T-cell (primary cell): ENCODE measurements at regions of chr5 and their contacts with region 1.

Region 1: GRCh38 chr5:98911280-98912040 is 17.3 kb downstream of the CHD1 start:
- DNase-seq: no peak
- ATAC-seq: peak in 1 of 4 experiments; percentile 23
- H3K4me3 ChIP-seq: no peak overlapping the region
- H3K4me3 Mint-ChIP-seq: no peak overlapping the region
- H3K27ac ChIP-seq: no peak overlapping the region
- H3K27ac Mint-ChIP-seq: peak overlapping the region; percentile 50 to 53
- H3K4me1 ChIP-seq: peaks cover 13 to 19% of the 10 kb centered on the region in 2 experiments
- H3K4me1 Mint-ChIP-seq: peaks cover 69 to 74% (median 70%) of the 10 kb centered on the region in 3 donors
- H3K27me3 ChIP-seq: no peaks in the 10 kb centered on the region
- H3K27me3 Mint-ChIP-seq: no peaks in the 10 kb centered on the region

Region 2: GRCh38 chr5:97364731-97365130 is 1546.7 kb before region 1 on chr5:
- CTCF ChIA-PET with region 1: no interaction called
- POLR2A ChIA-PET with region 1: no interaction called
- DNase-seq: no peak
- ATAC-seq: no peak
- H3K4me3 ChIP-seq: no peak overlapping the region
- H3K4me3 Mint-ChIP-seq: no peak overlapping the region
- H3K27ac ChIP-seq: no peak overlapping the region
- H3K27ac Mint-ChIP-seq: no peak overlapping the region
- H3K4me1 ChIP-seq: no peaks in the 10 kb centered on the region
- H3K4me1 Mint-ChIP-seq: no peaks in the 10 kb centered on the region
- H3K27me3 ChIP-seq: no peaks in the 10 kb centered on the region
- H3K27me3 Mint-ChIP-seq: no peaks in the 10 kb centered on the region

Region 3: DNA sequence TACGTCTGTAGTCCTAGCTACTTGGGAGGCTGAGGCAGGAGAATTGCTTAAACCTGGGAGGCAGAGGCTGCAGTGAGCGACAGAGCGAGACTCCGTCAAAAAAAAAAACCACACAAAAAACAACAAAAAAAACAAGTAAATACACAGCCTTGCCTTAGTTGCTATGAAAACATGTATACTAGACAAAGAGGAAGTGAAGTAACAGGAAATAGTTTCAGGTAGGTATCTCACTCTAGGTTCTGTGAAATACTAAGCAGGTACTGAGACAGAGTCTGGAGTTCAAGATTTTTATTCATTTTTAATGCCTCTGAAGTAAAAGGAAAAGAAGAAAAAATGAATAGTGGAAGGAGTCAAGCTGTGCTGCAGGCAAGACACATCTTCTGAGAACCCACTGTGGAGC is 825.9 kb before region 1 on chr5:
- CTCF ChIA-PET with region 1: no interaction called
- POLR2A ChIA-PET with region 1: no interaction called
- DNase-seq: no peak
- ATAC-seq: no peak
- H3K4me3 ChIP-seq: no peak overlapping the region
- H3K4me3 Mint-ChIP-seq: no peak overlapping the region
- H3K27ac ChIP-seq: no peak overlapping the region
- H3K27ac Mint-ChIP-seq: no peak overlapping the region
- H3K4me1 ChIP-seq: no peaks in the 10 kb centered on the region
- H3K4me1 Mint-ChIP-seq: no peaks in the 10 kb centered on the region
- H3K27me3 ChIP-seq: no peaks in the 10 kb centered on the region
- H3K27me3 Mint-ChIP-seq: no peaks in the 10 kb centered on the region

Region 4: GRCh38 chr5:98365126-98365525 is 546.3 kb before region 1 on chr5:
- CTCF ChIA-PET with region 1: no interaction called
- POLR2A ChIA-PET with region 1: no interaction called
- DNase-seq: no peak
- ATAC-seq: no peak
- H3K4me3 ChIP-seq: no peak overlapping the region
- H3K4me3 Mint-ChIP-seq: no peak overlapping the region
- H3K27ac ChIP-seq: no peak overlapping the region
- H3K27ac Mint-ChIP-seq: no peak overlapping the region
- H3K4me1 ChIP-seq: no peaks in the 10 kb centered on the region
- H3K4me1 Mint-ChIP-seq: no peaks in the 10 kb centered on the region
- H3K27me3 ChIP-seq: peaks cover 0 to 5% of the 10 kb centered on the region in 2 experiments
- H3K27me3 Mint-ChIP-seq: no peaks in the 10 kb centered on the region

Region 5: GRCh38 chr5:98891591-98891990 is 19.9 kb before region 1 on chr5:
- CTCF ChIA-PET with region 1: no interaction called
- POLR2A ChIA-PET with region 1: no interaction called
- DNase-seq: no peak
- ATAC-seq: no peak
- H3K4me3 ChIP-seq: no peak overlapping the region
- H3K4me3 Mint-ChIP-seq: no peak overlapping the region
- H3K27ac ChIP-seq: no peak overlapping the region
- H3K27ac Mint-ChIP-seq: no peak overlapping the region
- H3K4me1 ChIP-seq: no peaks in the 10 kb centered on the region
- H3K4me1 Mint-ChIP-seq: peaks cover 6% of the 10 kb centered on the region in 3 donors
- H3K27me3 ChIP-seq: no peaks in the 10 kb centered on the region
- H3K27me3 Mint-ChIP-seq: no peaks in the 10 kb centered on the region

Region 6: GRCh38 chr5:98923966-98924365 is 12.5 kb after region 1 on chr5:
- CTCF ChIA-PET with region 1: interaction called, 4 to 7 read pairs
- POLR2A ChIA-PET with region 1: interaction called, 9 to 27 read pairs
- DNase-seq: peak in 2 of 35 experiments; percentile 7 to 25
- ATAC-seq: no peak
- H3K4me3 ChIP-seq: no peak overlapping the region
- H3K4me3 Mint-ChIP-seq: peak overlapping the region in 2 of 3 donors; percentile 9 to 56
- H3K27ac ChIP-seq: no peak overlapping the region
- H3K27ac Mint-ChIP-seq: peak overlapping the region in 1 of 2 donors; percentile 39
- H3K4me1 ChIP-seq: peaks cover 17 to 43% of the 10 kb centered on the region in 2 experiments
- H3K4me1 Mint-ChIP-seq: peaks cover 73 to 77% (median 77%) of the 10 kb centered on the region in 3 donors
- H3K27me3 ChIP-seq: no peaks in the 10 kb centered on the region
- H3K27me3 Mint-ChIP-seq: no peaks in the 10 kb centered on the region

Region 7: DNA sequence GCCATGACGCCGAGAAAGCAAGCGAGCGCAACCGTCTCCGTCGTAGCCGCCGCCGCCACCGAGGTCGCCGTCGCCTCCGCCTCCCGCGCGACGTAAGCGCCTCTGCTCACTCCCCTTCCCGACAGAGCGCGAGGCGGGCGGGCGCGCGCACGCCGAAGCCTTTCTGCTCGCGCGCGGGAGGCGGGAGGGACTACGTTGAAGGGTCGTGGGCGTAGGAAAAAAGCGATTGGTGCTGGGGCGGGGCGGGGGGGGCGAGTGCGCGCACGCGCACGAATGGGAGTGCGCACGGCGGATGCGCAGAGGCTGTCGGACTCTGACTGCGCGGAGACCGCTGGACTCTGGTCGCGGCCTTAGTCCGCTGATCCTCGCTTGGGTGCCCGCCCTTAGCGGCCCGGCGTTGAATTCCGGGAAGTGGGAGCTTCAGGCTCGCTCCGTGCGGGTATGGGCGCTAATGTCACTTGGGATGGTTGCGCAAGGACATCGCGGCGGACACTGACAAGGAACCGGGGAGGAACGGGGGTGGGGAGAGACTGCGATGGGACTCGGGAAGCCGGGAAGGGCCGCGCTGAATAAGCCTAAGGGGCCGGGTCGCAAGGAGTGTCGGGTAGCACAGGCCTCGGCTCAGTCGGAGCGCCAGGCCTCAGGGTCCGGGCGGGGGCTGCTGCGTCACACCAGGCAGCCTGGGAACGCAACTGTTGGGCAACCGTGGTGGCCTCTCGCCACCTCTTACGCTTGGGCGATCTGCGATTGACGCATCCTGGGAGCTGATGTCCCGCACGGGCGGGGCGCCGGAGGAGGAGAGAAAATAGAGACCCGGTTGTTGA is 17.6 kb after region 1 on chr5 and contains the start of gene CHD1:
- CTCF ChIA-PET with region 1: interaction called, 4 to 7 read pairs
- POLR2A ChIA-PET with region 1: interaction called, 9 to 27 read pairs
- DNase-seq: peak; percentile 88 to 99 (median 97)
- ATAC-seq: peak; percentile 63 to 77 (median 74)
- H3K4me3 ChIP-seq: peak within 1 kb of the TSS; percentile 73 to 98
- H3K4me3 Mint-ChIP-seq: peak within 1 kb of the TSS; percentile 92 to 99 (median 97)
- H3K27ac ChIP-seq: peak within 1 kb of the TSS; percentile 100
- H3K27ac Mint-ChIP-seq: peak within 1 kb of the TSS; percentile 99 to 100
- H3K4me1 ChIP-seq: peaks cover 18 to 41% of the 10 kb centered on the region in 2 experiments
- H3K4me1 Mint-ChIP-seq: peaks cover 68 to 76% (median 71%) of the 10 kb centered on the region in 3 donors
- H3K27me3 ChIP-seq: no peaks in the 10 kb centered on the region
- H3K27me3 Mint-ChIP-seq: no peaks in the 10 kb centered on the region
- total RNA-seq, gene CHD1: 61.5 to 150 (median 64.9) TPM